ENCODE measurements at regions of chr16 and their contacts with region 1.

Region 1: GRCh38 chr16:66275775-66276428 is 90.6 kb upstream of the CDH5 start:
- DNase-seq: no peak
- H3K4me3 Mint-ChIP-seq: no peak overlapping the region
- H3K27ac Mint-ChIP-seq: no peak overlapping the region
- H3K4me1 Mint-ChIP-seq: no peaks in the 10 kb centered on the region
- H3K27me3 Mint-ChIP-seq: peaks cover 15% of the 10 kb centered on the region

Region 2: GRCh38 chr16:66315210-66315825 is 39.4 kb after region 1 on chr16:
- intact Hi-C with region 1: loop called (anchors 2 kb)
- DNase-seq: peak; percentile 23
- H3K4me3 Mint-ChIP-seq: no peak overlapping the region
- H3K27ac Mint-ChIP-seq: no peak overlapping the region
- H3K4me1 Mint-ChIP-seq: no peaks in the 10 kb centered on the region
- H3K27me3 Mint-ChIP-seq: no peaks in the 10 kb centered on the region

Region 3: DNA sequence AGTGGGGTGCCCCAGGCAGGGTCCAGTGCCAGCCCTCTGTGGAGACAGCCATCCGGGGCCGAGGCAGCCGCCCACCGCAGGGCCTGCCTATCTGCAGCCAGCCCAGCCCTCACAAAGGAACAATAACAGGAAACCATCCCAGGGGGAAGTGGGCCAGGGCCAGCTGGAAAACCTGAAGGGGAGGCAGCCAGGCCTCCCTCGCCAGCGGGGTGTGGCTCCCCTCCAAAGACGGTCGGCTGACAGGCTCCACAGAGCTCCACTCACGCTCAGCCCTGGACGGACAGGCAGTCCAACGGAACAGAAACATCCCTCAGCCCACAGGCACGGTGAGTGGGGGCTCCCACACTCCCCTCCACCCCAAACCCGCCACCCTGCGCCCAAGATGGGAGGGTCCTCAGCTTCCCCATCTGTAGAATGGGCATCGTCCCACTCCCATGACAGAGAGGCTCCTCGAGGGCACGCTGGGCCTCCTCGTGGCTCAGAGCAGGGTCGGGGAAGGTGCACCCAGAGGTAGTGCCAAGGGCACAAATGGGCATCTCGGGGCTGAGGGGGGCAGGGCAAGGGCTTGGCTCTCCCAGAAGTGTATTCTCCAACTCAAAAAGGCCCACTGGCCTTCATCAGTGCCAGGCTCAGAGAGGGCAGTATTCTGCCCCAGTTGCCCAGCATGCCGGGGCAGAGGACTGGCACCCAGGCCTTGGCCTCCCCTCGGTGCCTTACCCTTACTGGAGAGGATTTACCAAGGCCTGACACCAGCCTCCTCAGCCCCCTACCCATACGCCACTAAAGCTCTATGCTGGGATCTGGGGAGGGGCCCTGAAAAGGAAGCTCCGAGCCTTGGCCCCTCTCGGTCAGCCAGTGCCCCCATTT is 90.8 kb after region 1 on chr16 and contains the start of gene CDH5:
- intact Hi-C with region 1: no loop called
- DNase-seq: no peak
- H3K4me3 Mint-ChIP-seq: no peak within 1 kb of the TSS
- H3K27ac Mint-ChIP-seq: no peak within 1 kb of the TSS
- H3K4me1 Mint-ChIP-seq: peaks cover 4% of the 10 kb centered on the region
- H3K27me3 Mint-ChIP-seq: peaks cover 29% of the 10 kb centered on the region
- total RNA-seq, gene CDH5: not detected in 2 replicates